ENCODE measurements at regions of chr14 and their contacts with region 1.

Region 1: DNA sequence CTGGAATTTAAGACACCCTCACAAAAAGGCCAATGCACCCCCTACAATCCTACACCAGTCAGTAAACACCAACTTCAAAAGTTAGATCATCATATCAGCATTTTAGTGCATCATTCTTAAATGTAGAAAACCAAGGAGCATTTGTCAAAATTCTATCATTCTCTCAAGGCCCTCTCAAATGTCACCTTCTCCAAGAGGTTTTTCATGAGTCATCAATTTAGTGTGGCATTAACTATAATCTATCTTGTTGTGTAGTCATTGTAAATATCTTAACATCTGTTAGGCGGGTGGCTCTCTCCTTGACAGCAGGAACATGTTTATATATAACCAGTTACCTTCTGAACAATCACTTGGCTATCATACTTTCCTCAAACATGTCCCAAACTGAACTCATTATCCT is 62.1 kb upstream of the G2E3 start:
- DNase-seq: no peak
- H3K4me3 ChIP-seq: no peak overlapping the region
- H3K27ac ChIP-seq: no peak overlapping the region
- H3K4me1 ChIP-seq: no peaks in the 10 kb centered on the region
- H3K27me3 ChIP-seq: no peaks in the 10 kb centered on the region
- CTCF ChIP-seq: no peak
- EP300 ChIP-seq: no peak
- POLR2A ChIP-seq: no peak

Region 2: DNA sequence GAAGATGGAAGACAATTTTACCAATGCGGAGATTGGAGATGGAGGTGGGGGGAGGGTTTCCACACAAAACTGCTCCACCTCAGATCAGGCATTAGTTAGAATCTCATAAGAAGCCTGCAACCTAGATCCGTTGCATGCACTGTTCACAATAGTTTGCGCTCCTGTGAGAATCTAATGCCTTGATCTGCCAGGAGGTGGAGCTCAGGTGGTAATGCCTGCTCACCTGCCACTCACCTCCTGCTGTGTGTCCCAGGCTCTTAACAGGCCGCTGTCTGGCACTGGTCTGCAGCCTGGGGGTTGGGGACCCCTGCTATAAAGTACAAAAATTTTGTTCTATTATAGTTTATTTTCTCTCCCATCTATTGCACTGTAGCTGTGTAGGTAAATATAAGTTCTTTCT is 1815.2 kb before region 1 on chr14:
- intact Hi-C with region 1: loop called (anchors 10 kb)
- DNase-seq: no peak
- H3K4me3 ChIP-seq: no peak overlapping the region
- H3K27ac ChIP-seq: no peak overlapping the region
- H3K4me1 ChIP-seq: no peaks in the 10 kb centered on the region
- H3K27me3 ChIP-seq: no peaks in the 10 kb centered on the region
- CTCF ChIP-seq: no peak
- EP300 ChIP-seq: no peak
- POLR2A ChIP-seq: no peak

Region 3: DNA sequence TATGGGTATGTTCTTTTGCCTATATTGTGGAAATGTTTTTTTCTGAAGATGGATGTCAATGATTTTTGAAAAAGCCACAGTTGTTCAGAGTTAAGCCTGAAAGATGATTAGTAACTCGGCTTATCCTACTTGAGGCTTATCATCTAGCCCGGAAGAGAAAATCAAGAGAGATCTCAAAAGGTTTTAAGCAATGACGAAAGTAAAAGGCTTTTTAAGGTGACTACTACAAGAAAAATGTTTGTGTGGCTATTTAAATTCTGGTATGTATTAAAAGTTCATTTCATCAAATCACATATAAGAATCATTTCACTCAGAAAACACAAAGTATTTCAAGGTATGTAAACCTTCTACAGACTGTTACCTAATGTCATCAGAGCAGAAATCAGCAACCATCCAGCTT is 883.3 kb after region 1 on chr14:
- intact Hi-C with region 1: no loop called
- DNase-seq: no peak
- H3K4me3 ChIP-seq: no peak overlapping the region
- H3K27ac ChIP-seq: no peak overlapping the region
- H3K4me1 ChIP-seq: peaks cover 0 to 12% (median 7%) of the 10 kb centered on the region in 4 donors
- H3K27me3 ChIP-seq: no peaks in the 10 kb centered on the region
- CTCF ChIP-seq: no peak
- EP300 ChIP-seq: no peak
- POLR2A ChIP-seq: no peak